ENCODE measurements at regions of chr19 and their contacts with region 1.

Region 1: DNA sequence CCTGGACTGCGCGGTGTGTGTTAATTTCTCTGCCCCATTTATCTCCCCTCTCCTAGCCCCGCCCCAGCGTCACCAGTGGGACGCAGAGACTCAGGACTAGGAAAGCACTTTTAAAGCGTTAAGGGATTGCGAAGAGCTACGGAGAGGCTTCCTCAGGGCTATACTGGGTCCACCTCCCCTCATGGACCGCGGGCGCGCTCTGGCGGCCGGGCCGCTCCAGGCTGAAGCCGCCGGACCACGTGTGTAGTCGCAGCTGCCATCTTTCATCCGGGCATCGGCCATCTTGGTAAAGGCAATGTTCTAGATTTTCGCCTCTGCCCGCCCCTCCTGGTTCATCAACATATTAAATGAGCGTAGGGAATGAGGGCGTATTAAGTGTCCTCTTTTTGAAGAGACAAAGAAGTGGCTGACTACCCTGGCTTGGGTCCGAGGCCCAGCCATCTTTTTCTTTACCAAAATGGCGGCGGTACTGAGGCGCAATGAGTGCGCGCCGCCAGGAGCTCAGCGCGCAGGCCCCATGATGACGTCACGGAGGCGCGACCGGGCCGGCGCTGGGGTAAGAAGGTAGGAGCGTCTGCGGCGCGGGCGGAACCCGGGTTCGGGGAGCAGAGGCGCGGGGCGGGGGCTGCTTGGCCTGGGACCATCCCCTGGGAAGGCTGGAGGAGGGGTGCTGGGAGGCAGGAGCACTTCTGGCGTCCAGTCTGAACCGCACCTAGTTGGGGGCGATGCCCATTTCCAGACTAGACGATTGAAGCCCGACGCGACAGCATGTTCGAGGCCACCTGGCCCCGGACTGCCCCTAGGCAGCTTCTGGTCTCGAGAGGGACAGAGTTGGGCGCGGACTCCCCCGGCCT is at the start of gene CCDC124:
- DNase-seq: peak; percentile 96
- ATAC-seq: peak; percentile 98
- H3K4me3 Mint-ChIP-seq: peak within 1 kb of the TSS; percentile 77
- H3K27ac Mint-ChIP-seq: peak within 1 kb of the TSS; percentile 86
- H3K4me1 Mint-ChIP-seq: peaks cover 37% of the 10 kb centered on the region
- H3K27me3 Mint-ChIP-seq: no peaks in the 10 kb centered on the region
- total RNA-seq, gene CCDC124: 83.8 to 101 TPM

Region 2: DNA sequence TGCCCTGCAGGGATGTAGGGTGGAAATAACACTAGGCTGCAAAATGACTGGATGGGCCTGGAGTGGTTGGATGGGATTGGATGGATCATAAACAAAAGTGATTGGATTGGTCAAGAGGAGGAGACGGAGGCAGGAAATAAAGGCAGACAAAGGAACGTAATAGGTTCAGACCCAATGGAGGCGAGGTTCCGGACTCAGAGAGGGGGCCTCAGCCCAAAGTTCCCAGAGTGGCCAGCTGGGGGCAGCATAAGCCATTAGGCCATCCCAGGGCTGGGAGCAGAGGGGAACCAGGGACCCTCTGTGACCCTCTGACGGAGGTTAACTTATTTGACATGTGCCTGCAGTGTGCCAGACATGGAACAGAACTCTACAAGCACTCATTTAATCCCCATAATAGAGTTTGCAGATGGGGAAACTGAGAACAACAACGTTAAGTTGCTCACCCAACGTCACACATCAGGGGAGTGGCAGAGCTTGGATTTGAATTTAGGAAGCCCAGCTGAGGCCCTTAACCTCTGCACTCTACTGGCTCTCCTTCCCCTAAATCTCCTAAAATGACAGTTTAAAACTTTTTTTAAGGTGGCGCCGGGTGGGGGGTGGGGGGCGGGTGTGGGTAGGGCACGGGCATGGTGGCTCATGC is 228.8 kb before region 1 on chr19:
- CTCF ChIA-PET with region 1: interaction called, 21 read pairs
- DNase-seq: peak; percentile 76
- ATAC-seq: peak; percentile 84
- H3K4me3 Mint-ChIP-seq: no peak overlapping the region
- H3K27ac Mint-ChIP-seq: no peak overlapping the region
- H3K4me1 Mint-ChIP-seq: no peaks in the 10 kb centered on the region
- H3K27me3 Mint-ChIP-seq: peaks cover 6% of the 10 kb centered on the region

Region 3: GRCh38 chr19:17775991-17776803 is 156.5 kb before region 1 on chr19:
- CTCF ChIA-PET with region 1: no interaction called
- DNase-seq: peak; percentile 59
- ATAC-seq: peak; percentile 31
- H3K4me3 Mint-ChIP-seq: no peak overlapping the region
- H3K27ac Mint-ChIP-seq: peak overlapping the region; percentile 73
- H3K4me1 Mint-ChIP-seq: peaks cover 20% of the 10 kb centered on the region
- H3K27me3 Mint-ChIP-seq: no peaks in the 10 kb centered on the region

Region 4: GRCh38 chr19:17847538-17848366 is 85.0 kb before region 1 on chr19 and contains the start of gene JAK3:
- CTCF ChIA-PET with region 1: interaction called, 39 read pairs
- DNase-seq: peak; percentile 94
- ATAC-seq: peak; percentile 81
- H3K4me3 Mint-ChIP-seq: peak within 1 kb of the TSS; percentile 86
- H3K27ac Mint-ChIP-seq: peak within 1 kb of the TSS; percentile 95
- H3K4me1 Mint-ChIP-seq: peaks cover 70% of the 10 kb centered on the region
- H3K27me3 Mint-ChIP-seq: no peaks in the 10 kb centered on the region
- total RNA-seq, gene JAK3: 137 to 146 TPM

Region 5: DNA sequence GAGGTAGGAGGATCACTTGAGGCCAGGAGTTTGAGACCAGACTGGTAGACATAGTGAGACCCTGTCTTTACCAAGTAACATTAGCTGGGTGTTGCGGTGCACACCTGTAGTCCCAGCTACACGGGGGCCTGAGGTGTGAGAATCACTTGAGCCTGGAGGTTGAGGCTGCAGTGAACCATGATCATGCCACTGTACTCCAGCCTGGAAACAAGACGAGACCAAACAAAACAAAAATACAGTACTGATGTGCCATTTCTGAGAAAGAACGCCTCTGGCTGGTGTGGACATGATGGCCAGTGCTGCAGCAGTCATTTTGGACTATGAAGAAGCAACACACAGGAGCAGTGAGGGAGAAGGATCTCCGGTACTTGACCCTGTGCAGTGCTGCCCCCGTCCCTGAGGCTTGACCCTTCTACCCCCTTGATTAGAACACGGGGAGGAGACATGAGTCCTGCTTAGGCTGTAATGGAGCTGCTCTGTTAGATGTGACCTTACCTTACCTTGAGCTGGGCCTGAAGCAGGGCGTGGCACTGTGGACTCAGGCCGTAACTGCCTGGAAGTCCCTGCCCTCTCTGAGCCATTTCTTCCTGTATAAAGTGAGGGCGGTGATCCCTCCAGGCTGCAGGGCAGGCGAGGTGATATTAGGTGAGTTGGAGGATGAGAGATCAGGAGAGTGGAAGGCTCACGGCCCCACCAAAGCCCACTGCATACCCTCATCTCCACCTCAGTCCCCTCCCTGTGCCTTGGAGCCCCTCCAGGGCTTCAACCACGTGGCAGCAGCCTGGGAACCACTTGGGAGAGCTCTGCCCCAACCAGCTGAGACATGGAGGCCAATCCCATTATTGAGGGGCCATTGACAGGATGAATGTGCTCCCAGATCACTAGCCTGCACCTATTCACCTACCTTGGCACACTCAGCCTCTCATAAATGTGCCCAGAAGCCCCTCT is 67.1 kb before region 1 on chr19:
- CTCF ChIA-PET with region 1: interaction called, 361 read pairs
- DNase-seq: no peak
- ATAC-seq: no peak
- H3K4me3 Mint-ChIP-seq: no peak overlapping the region
- H3K27ac Mint-ChIP-seq: peak overlapping the region; percentile 45
- H3K4me1 Mint-ChIP-seq: peaks cover 19% of the 10 kb centered on the region
- H3K27me3 Mint-ChIP-seq: no peaks in the 10 kb centered on the region

Region 6: GRCh38 chr19:17873786-17874757 is 58.6 kb before region 1 on chr19:
- CTCF ChIA-PET with region 1: interaction called, 55 read pairs
- DNase-seq: peak; percentile 76
- ATAC-seq: peak; percentile 75
- H3K4me3 Mint-ChIP-seq: peak overlapping the region; percentile 67
- H3K27ac Mint-ChIP-seq: peak overlapping the region; percentile 67
- H3K4me1 Mint-ChIP-seq: peaks cover 22% of the 10 kb centered on the region
- H3K27me3 Mint-ChIP-seq: peaks cover 2% of the 10 kb centered on the region

Region 7: GRCh38 chr19:17947815-17948513 is 15.3 kb after region 1 on chr19:
- CTCF ChIA-PET with region 1: interaction called, 77 read pairs
- DNase-seq: peak; percentile 96
- ATAC-seq: peak; percentile 78
- H3K4me3 Mint-ChIP-seq: peak overlapping the region; percentile 77
- H3K27ac Mint-ChIP-seq: no peak overlapping the region
- H3K4me1 Mint-ChIP-seq: peaks cover 36% of the 10 kb centered on the region
- H3K27me3 Mint-ChIP-seq: peaks cover 40% of the 10 kb centered on the region

Region 8: GRCh38 chr19:17966550-17967256 is 34.0 kb after region 1 on chr19 and contains the start of gene KCNN1:
- CTCF ChIA-PET with region 1: no interaction called
- DNase-seq: no peak
- ATAC-seq: peak; percentile 12
- H3K4me3 Mint-ChIP-seq: no peak within 1 kb of the TSS
- H3K27ac Mint-ChIP-seq: no peak within 1 kb of the TSS
- H3K4me1 Mint-ChIP-seq: peaks cover 2% of the 10 kb centered on the region
- H3K27me3 Mint-ChIP-seq: peaks cover 46% of the 10 kb centered on the region
- total RNA-seq, gene KCNN1: 0.21 TPM in 1 of 2 experiments, not detected in the other

Region 9: GRCh38 chr19:18000935-18001778 is 68.4 kb after region 1 on chr19:
- CTCF ChIA-PET with region 1: interaction called, 301 read pairs
- DNase-seq: peak; percentile 95
- ATAC-seq: peak; percentile 87
- H3K4me3 Mint-ChIP-seq: peak overlapping the region; percentile 82
- H3K27ac Mint-ChIP-seq: peak overlapping the region; percentile 99
- H3K4me1 Mint-ChIP-seq: peaks cover 26% of the 10 kb centered on the region
- H3K27me3 Mint-ChIP-seq: no peaks in the 10 kb centered on the region

Region 10: DNA sequence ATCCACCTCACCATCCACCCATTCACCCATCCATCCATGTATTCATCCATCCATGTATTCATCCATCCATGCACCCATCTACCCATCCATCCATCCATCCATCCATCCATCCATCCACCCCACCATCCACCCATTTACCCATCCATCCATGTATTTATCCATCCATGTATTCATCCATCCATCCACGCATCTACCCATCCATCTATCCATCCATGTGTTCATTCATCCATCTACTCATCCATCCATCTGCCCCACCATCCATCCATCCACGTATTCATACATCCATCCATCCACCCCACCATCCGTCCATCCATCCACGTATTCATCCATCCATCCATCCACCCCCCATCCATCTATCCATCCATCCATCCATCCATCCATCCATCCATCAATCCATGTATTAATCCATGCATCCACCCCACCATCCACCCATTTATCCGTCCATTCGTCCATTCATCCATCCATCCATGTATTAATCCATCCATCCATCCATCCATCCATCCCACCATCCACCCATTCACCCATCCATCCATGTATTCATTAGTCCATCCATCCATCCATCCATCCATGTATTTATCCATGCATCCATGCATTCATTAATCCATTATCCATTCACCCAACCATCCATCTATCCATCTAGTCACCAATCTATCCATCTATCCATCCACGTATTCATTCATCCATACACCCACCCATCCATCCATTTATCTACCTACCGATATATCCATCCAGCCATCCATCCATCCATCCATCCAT is 151.4 kb after region 1 on chr19:
- CTCF ChIA-PET with region 1: no interaction called
- DNase-seq: no peak
- ATAC-seq: no peak
- H3K4me3 Mint-ChIP-seq: peak overlapping the region; percentile 95
- H3K27ac Mint-ChIP-seq: peak overlapping the region; percentile 19
- H3K4me1 Mint-ChIP-seq: peaks cover 44% of the 10 kb centered on the region
- H3K27me3 Mint-ChIP-seq: no peaks in the 10 kb centered on the region

Measured in activated CD8-positive, alpha-beta memory T cell treated with anti-CD3 and anti-CD28 coated beads, Interleukin-2, amount 10 ng/mL, durations not matched to agents 7 days and 5 days (primary cell).